Activated CD4-positive, alpha-beta memory T cell treated with anti-CD3 and anti-CD28 coated beads for 36 hours (primary cell): ENCODE measurements at regions of chr14 and their contacts with region 1.

Region 1: DNA sequence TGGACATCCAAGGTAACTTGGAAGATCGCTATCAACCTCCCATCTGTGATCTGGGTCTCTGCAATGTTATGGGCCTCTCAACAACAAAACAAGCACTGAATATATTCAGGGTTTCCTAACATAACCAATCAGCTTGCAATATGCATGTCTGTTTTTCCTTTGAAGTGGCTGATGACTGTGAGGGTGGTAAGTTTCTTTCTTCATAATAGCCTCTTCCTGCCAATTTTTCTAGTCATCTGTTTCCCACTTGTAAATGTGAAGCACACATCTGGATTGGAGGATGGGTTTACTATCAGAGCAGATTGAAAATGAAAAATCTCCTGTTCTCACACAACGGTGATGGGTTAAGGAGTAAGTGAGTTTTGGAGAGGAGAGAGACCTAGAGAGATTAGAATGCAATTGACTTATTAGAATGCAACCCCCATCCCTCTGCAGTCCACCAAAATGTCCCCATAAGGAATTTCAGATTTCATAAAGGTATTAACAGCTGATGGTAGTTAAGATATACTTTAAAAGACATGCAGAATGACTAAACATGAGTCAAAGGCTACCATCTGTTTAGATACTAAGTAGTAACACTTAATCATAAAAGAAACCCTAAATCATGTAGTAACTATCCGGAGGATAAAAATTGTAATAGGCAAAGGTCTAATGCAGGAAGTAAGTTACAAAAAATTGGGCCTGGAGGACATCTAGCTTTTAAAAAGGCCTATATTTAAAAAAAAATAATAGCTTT is 58.4 kb upstream of the SAV1 start:
- DNase-seq: peak; percentile 24
- H3K4me3 Mint-ChIP-seq: peak overlapping the region; percentile 45
- H3K27ac Mint-ChIP-seq: peak overlapping the region; percentile 94
- H3K4me1 Mint-ChIP-seq: peaks cover 33% of the 10 kb centered on the region
- H3K27me3 Mint-ChIP-seq: no peaks in the 10 kb centered on the region

Region 2: DNA sequence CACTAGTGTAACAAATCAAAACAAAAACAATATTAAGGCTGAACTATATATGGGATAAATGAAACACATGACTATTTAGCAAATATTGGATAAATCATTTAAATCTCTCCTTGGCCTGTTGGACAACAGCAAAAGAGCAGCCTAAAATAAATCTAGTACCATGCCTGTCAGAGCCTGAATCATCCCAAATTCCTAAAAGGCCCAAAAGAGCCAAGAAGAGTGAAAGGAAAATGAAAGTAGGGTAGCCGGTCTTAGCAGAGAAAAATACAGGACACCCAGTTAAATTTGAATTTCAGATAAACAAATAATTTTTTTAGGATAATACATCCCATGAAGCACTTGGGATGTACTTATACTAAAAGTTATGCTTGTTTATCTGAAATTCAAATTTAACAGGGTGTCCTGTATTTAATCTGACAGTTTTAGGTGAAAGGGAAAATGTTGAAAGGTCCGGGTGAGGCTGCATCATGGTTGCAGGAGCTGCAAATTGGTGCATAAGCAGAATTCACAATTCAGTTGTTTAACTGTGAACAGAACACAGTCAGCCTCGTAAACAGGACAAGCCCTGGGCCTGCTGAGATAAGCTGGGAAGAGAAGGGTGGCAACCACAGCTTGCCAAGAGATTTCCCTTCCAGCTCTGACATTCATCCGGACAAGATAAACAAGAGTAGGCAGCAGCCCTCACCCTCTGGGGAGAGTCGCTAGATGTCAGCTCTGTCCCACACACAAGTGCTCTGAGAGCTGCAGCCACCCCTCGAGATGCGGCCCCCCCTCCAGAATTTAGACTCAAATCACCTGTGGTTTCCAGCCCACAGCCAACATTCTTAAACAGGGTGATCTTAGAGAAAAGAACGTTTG is 384.1 kb before region 1 on chr14:
- CTCF ChIA-PET with region 1: interaction called, 4 read pairs
- POLR2A ChIA-PET with region 1: no interaction called
- intact Hi-C with region 1: loop called (anchors 1 kb)
- DNase-seq: peak; percentile 56
- H3K4me3 Mint-ChIP-seq: no peak overlapping the region
- H3K27ac Mint-ChIP-seq: no peak overlapping the region
- H3K4me1 Mint-ChIP-seq: peaks cover 22% of the 10 kb centered on the region
- H3K27me3 Mint-ChIP-seq: peaks cover 4% of the 10 kb centered on the region

Region 3: DNA sequence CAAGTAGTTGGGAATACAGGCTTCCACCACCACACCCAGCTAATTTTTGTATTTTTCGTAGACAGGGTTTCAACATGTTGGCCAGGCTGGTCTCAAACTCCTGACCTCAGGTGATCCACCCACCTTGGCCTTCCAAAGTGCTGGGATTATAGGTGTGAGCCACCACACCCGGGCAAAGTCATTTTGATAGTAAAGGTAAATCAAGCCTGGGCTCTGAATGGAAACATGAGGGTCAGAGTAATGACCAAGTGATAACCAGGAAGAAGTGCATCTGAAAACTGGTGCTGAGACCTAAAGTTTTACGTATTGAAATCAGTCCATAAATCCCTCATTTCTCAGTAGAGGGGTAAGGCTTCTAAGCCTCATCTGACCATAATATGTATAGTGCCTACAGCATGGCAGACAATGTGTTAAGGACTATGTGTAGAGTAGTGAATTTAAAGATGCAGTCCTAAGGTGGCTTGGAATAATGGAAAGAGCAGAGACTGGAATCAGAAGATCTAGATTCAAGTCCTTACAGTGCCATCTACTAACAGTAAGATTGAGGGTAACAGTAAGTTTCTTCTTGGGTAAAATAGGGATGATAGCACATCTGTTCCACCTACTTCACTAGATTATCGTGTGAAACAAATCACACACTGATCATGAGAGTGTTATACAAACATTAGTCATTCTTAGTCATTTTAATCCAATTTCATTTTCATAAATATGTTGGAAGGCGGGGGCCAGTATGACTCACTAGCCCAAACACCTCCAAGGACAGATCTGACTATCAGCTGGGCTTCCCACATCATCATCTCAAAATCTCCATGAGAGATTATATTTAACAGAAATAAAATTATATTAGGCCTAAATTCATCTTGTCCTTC is 205.4 kb before region 1 on chr14:
- CTCF ChIA-PET with region 1: no interaction called
- POLR2A ChIA-PET with region 1: no interaction called
- intact Hi-C with region 1: loop called (anchors 1 kb)
- DNase-seq: peak; percentile 84
- H3K4me3 Mint-ChIP-seq: peak overlapping the region; percentile 25
- H3K27ac Mint-ChIP-seq: peak overlapping the region; percentile 85
- H3K4me1 Mint-ChIP-seq: peaks cover 56% of the 10 kb centered on the region
- H3K27me3 Mint-ChIP-seq: no peaks in the 10 kb centered on the region

Region 4: DNA sequence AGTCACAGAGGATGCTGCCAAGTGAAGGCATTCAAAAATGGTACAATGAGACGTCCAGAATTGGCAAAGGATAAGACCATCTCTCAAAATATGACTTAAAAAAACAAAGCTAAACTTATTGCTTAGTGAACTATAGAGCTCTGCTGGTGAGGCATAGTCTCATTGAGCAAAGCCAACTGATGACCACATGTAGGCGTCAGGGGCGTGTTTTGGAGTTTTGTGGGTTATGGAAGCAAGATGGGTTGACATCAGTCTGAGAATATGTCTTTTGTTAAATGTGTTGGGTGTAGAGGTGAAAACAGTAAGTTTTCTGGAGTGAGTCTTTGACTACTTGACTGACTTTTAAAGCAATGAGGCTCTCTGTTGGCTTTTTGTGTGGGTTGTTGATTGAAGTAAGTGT is 119.4 kb before region 1 on chr14:
- CTCF ChIA-PET with region 1: no interaction called
- POLR2A ChIA-PET with region 1: no interaction called
- intact Hi-C with region 1: loop called (anchors 5 kb)
- DNase-seq: peak; percentile 80
- H3K4me3 Mint-ChIP-seq: no peak overlapping the region
- H3K27ac Mint-ChIP-seq: no peak overlapping the region
- H3K4me1 Mint-ChIP-seq: peaks cover 7% of the 10 kb centered on the region
- H3K27me3 Mint-ChIP-seq: peaks cover 4% of the 10 kb centered on the region

Region 5: GRCh38 chr14:50667996-50668825 is 58.3 kb before region 1 on chr14 and contains the start of gene SAV1:
- CTCF ChIA-PET with region 1: no interaction called
- POLR2A ChIA-PET with region 1: interaction called, 6 read pairs
- intact Hi-C with region 1: loop called (anchors 1 kb)
- DNase-seq: peak; percentile 67
- H3K4me3 Mint-ChIP-seq: no peak within 1 kb of the TSS
- H3K27ac Mint-ChIP-seq: peak within 1 kb of the TSS; percentile 63
- H3K4me1 Mint-ChIP-seq: peaks cover 18% of the 10 kb centered on the region
- H3K27me3 Mint-ChIP-seq: no peaks in the 10 kb centered on the region
- total RNA-seq, gene SAV1: 13.4 to 13.5 TPM

Region 6: DNA sequence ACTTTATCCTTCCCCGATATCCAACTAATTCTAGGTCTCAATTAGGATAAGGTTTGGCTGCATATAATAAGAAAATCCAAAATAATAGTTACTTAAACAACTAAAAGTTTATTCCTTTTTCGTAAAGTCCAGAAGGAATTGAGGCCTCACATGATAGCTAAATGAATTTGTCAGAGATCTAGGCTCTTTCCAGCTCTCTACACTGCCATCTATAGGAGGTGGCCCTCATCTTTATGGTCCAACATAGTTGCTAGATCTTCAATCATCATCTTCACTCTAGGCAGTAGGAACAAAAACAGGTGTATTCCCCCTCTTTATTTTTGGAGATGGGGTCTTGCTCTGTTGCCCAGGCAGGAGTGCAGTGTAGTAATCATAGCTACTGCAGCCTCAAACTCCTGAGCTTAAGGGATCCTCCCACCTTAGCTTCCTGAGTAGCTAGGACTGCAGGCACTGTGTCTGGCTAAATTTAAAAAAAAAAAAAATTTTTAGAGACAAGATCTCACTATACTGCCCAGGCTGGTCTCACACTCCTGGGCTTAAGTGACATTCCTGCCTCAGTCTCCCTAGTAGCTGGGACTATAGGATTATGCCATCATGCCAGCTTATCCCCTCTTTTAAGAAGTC is 12.0 kb before region 1 on chr14:
- CTCF ChIA-PET with region 1: interaction called, 22 read pairs
- POLR2A ChIA-PET with region 1: interaction called, 3 read pairs
- intact Hi-C with region 1: no loop called
- DNase-seq: no peak
- H3K4me3 Mint-ChIP-seq: no peak overlapping the region
- H3K27ac Mint-ChIP-seq: no peak overlapping the region
- H3K4me1 Mint-ChIP-seq: no peaks in the 10 kb centered on the region
- H3K27me3 Mint-ChIP-seq: no peaks in the 10 kb centered on the region

Region 7: GRCh38 chr14:50762001-50762930 is 35.7 kb after region 1 on chr14:
- CTCF ChIA-PET with region 1: interaction called, 16 read pairs
- POLR2A ChIA-PET with region 1: interaction called, 20 read pairs
- intact Hi-C with region 1: loop called (anchors 1 kb)
- DNase-seq: peak; percentile 77
- H3K4me3 Mint-ChIP-seq: no peak overlapping the region
- H3K27ac Mint-ChIP-seq: peak overlapping the region; percentile 24
- H3K4me1 Mint-ChIP-seq: peaks cover 25% of the 10 kb centered on the region
- H3K27me3 Mint-ChIP-seq: no peaks in the 10 kb centered on the region